ENCODE measurements at regions of chr5 and their contacts with region 1.

Region 1: DNA sequence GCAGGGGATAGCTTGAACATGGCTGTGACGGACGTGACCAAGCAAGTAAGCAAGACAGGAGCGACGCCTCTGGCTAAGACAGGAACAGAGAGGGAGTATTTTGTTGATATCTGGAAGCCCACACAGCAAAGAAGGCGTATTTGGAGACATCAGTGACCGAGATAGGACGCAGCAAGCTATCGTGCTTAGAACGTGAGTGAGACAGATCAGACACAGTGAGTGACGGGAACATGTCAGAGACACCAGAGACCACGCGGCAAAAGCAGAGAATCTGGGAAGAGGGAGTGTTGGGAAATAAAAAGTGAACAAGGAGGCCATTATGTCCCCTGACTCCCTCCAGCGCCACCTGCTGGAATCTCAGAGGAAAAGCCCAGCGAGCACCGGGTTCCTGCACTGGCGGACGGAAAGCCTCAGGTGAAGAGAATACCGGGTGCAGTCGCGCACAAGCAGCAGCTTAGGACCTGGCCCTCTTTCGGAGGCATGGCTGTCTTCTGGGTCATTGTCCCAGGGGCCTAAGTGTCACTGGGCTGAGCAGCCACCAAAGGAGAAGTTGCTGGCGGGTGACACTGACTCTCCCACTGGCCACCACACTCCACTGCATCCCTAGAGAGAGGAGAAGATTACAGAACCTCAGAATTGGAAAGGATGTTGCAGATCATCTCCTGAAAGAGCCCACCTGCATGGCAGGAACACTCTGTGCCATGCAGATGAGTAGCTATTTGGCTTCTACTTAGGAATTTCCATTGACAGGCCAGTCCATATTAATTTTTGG is 99.1 kb downstream of the FBXO38 start:
- DNase-seq: peak; percentile 36 to 59
- H3K4me3 ChIP-seq: no peak overlapping the region
- H3K27ac ChIP-seq: no peak overlapping the region
- H3K4me1 ChIP-seq: no peaks in the 10 kb centered on the region
- H3K27me3 ChIP-seq: no peaks in the 10 kb centered on the region
- CTCF ChIP-seq: peak; percentile 33 to 79 (median 53)
- POLR2A ChIP-seq: no peak

Region 2: DNA sequence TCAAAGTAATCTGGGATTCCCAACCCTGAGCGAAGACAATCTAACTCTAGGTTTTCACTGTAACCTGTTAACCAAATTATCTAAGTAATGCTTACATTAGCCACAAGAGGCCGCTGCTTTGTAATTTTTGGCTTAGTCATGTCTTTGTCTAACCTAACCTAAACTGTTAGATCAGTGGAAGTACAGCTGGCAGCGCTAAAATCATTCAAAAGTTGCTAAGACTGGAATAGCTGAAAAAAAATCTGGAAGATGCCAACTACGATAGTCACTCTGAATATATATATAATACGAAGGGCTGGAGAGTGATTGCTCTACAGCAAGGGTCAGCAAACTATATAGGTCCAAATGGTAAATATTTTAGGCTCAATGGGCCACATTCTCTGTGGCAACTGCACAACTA is 38.9 kb before region 1 on chr5:
- intact Hi-C with region 1: loop called (anchors 5 kb)
- DNase-seq: peak; percentile 8 to 31
- H3K4me3 ChIP-seq: no peak overlapping the region
- H3K27ac ChIP-seq: no peak overlapping the region
- H3K4me1 ChIP-seq: no peaks in the 10 kb centered on the region
- H3K27me3 ChIP-seq: no peaks in the 10 kb centered on the region
- CTCF ChIP-seq: peak; percentile 26 to 80 (median 60)
- POLR2A ChIP-seq: no peak

Measured in thyroid gland (tissue), 4 donors.